ENCODE measurements at regions of chr14 and their contacts with region 1.

Region 1: GRCh38 chr14:70027785-70028428 is 148.7 kb downstream of the SMOC1 start:
- DNase-seq: peak; percentile 76
- H3K4me3 Mint-ChIP-seq: no peak overlapping the region
- H3K27ac Mint-ChIP-seq: no peak overlapping the region
- H3K4me1 Mint-ChIP-seq: no peaks in the 10 kb centered on the region
- H3K27me3 Mint-ChIP-seq: no peaks in the 10 kb centered on the region

Region 2: DNA sequence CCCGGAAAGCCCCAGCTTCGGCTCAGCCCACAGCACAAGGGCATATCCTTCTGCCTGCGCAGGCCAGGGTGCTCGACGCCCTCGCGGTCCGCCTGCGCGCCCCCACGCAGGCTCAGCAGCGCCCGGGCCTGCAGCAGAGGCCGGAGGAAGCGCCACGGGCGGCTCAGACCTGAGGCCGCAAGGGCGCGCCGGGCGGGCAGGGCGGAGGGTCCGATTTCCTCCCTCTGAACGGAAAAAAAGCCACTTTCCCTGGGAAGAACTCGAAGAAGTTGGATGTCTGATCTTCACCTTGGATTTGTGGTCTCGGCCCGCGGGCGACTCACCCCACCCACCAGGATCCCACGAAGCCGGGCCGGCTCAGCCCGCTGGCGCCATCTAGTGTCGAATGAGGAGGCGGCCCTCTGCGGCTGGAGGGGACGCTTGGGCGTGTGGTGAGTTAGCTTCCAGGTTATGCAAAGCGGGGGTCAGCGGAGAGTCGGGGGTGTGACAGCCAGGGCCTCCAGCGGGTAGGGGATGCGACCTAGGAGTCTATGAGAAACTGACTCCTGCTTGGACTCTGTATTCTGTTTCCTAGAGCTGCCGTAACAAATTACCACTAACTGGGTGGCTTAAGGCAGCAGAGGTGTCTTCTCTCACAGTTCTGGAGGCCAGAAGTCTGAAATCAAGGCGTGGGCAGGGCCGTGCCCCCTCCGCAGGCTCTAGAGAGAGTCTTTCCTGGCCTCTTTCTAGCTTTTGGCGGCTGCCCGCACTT is 301.0 kb before region 1 on chr14:
- CTCF ChIA-PET with region 1: interaction called, 19 read pairs
- DNase-seq: peak; percentile 84
- H3K4me3 Mint-ChIP-seq: peak overlapping the region; percentile 57
- H3K27ac Mint-ChIP-seq: peak overlapping the region; percentile 6
- H3K4me1 Mint-ChIP-seq: peaks cover 28% of the 10 kb centered on the region
- H3K27me3 Mint-ChIP-seq: peaks cover 18% of the 10 kb centered on the region

Region 3: DNA sequence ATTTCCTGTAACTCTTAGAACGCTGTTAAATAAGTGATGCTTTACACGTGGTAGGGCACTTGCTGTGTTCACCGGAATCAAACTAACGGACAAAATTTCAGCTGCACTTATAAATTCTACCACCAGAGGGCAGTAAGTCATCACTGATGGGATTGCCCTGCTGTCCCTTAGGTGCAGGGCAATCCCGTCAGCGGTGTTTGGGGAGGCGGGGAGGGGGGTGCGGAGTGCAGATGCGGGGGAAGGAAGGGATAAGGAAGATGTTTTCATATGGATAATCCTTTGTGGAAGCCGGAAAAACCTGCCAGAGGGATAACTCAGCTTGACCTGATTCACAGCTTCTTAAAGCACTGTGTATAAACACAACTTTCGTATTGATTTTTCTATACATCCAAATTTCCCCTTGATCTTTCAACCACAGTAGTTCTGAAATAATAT is 209.1 kb before region 1 on chr14:
- CTCF ChIA-PET with region 1: interaction called, 27 read pairs
- DNase-seq: peak; percentile 58
- H3K4me3 Mint-ChIP-seq: no peak overlapping the region
- H3K27ac Mint-ChIP-seq: no peak overlapping the region
- H3K4me1 Mint-ChIP-seq: no peaks in the 10 kb centered on the region
- H3K27me3 Mint-ChIP-seq: peaks cover 17% of the 10 kb centered on the region

Region 4: DNA sequence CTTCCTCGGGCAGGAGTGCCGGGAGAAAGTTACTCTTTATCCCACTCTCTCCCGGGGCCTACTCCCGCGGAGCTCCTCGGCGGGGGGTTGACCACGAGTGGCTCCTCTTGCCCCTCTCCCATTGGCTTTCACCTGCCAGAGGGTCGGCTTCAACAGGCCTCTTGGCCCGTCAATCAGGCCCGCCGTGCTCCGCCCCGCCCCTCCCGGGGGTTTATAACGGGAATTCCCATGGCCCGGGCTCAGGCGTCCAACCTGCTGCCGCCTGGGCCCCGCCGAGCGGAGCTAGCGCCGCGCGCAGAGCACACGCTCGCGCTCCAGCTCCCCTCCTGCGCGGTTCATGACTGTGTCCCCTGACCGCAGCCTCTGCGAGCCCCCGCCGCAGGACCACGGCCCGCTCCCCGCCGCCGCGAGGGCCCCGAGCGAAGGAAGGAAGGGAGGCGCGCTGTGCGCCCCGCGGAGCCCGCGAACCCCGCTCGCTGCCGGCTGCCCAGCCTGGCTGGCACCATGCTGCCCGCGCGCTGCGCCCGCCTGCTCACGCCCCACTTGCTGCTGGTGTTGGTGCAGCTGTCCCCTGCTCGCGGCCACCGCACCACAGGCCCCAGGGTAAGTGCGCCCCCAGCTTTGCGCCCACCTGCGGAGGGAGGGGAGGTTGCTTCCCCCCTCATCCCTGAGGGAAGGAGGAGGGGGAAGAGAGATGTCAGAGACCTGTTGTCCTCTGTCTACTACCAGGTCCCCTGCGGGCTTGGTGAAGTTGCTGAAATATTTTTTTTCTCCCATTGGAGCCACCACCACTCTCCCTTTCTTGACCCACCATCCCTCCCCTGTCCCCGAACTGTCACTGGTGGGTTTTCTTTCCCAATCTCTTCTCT is 148.5 kb before region 1 on chr14 and contains the start of gene SMOC1:
- CTCF ChIA-PET with region 1: interaction called, 27 read pairs
- DNase-seq: no peak
- H3K4me3 Mint-ChIP-seq: no peak within 1 kb of the TSS
- H3K27ac Mint-ChIP-seq: no peak within 1 kb of the TSS
- H3K4me1 Mint-ChIP-seq: no peaks in the 10 kb centered on the region
- H3K27me3 Mint-ChIP-seq: peaks cover 66% of the 10 kb centered on the region

Region 5: DNA sequence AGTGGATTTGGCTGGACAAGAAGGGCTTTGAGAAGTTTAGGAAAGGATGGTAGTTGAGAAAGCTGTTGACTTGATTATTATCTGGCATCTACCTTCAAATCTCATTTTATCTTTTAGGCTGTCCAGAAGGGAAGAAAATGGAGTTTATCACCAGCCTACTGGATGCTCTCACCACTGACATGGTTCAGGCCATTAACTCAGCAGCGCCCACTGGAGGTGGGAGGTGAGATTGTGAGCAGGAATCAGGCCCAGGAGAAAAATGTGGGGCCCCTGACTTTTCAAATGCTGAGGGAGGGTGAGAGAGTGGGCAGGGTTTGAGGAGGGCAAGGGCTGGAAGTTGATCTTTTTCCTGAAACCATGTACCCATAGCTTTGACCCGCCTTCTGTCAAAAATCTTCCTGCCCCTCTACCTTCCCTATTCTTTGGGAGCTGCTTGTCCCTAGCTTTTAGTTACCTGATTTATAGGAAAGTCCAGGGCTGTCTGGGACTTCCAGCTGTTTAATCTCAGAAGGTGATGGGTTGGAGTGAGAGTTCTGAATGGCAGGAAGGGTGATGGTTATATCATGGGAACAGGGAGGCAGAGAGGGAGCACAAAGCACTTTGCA is 14.5 kb before region 1 on chr14:
- CTCF ChIA-PET with region 1: interaction called, 15 read pairs
- DNase-seq: peak; percentile 53
- H3K4me3 Mint-ChIP-seq: no peak overlapping the region
- H3K27ac Mint-ChIP-seq: no peak overlapping the region
- H3K4me1 Mint-ChIP-seq: peaks cover 7% of the 10 kb centered on the region
- H3K27me3 Mint-ChIP-seq: peaks cover 10% of the 10 kb centered on the region

Region 6: GRCh38 chr14:70086685-70087379 is 58.9 kb after region 1 on chr14:
- CTCF ChIA-PET with region 1: no interaction called
- DNase-seq: peak; percentile 25
- H3K4me3 Mint-ChIP-seq: no peak overlapping the region
- H3K27ac Mint-ChIP-seq: no peak overlapping the region
- H3K4me1 Mint-ChIP-seq: no peaks in the 10 kb centered on the region
- H3K27me3 Mint-ChIP-seq: peaks cover 12% of the 10 kb centered on the region